AG04449 (cell line): ENCODE measurements at regions of chr15 and their contacts with region 1.

Region 1: DNA sequence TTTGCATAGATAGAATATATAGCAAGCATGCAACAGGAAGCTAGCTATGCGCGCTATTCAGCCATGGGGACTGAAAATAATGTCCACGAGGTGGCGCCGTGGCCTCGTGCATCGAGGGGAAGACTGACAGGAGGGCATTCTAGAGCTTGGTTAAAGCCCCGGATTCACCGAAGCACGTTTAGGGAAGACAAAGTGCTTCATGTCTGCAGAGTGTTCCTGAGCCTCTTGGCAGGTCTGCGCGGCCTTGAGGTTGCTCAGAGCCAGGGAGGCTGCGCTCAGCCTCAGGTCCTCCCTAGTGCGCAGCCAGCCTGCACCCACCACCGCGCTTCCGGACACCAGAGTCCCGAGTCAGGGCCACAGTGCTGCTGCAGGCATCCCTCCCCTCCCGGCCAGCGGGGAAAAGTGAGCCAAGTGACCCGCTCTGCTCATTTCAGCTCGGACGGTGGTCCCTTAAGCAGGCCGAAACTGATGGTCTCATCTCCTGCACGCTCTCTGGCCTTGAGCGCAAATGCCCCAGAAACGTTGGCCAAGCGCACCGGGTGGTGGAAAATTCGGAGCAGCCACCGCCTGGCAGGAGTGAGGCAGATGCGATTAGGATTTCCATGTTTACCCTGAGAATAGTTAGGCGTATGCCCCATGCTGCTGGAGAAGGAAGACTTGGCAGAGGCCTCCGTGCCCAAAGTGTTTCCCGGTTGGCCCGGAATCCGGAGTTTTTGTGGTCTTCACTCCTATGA is 24.8 kb downstream of the GABRA5 start:
- DNase-seq: no peak
- H3K4me3 ChIP-seq: peak overlapping the region; percentile 42
- CTCF ChIP-seq: peak; percentile 74

Region 2: GRCh38 chr15:26391567-26392194 is 499.9 kb before region 1 on chr15:
- CTCF ChIA-PET with region 1: no interaction called
- POLR2A ChIA-PET with region 1: no interaction called
- DNase-seq: no peak
- H3K4me3 ChIP-seq: no peak overlapping the region
- CTCF ChIP-seq: no peak

Region 3: DNA sequence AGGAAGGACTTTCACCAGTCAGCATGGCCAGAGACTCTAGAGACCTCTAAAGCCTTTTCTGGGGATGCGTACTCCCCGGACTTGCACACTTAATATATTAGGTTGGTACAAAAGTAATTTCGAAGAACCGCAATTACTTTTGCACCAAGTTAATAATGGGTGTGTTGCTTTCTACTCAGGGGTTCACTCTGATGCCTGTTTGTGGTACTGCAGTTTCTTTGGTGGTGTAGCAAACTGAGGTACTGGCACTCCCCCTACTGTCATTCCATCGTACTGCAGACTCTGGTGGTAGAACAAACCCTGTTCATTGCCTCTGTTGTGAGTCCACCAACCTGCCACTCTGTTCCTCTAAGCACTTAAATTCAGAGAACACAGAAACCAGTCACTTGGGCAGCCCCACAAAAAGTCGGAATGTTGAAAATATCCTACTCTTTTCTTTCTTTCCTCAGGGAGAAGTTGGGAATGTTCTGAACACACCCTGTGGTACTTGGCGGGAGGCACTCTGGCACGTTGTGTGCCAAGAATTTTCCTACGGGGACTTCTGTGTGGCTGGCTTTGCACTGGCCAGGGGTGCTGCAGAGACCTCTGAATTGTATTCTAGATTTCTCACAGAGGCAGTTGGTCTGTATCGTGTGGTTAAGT is 125.7 kb after region 1 on chr15:
- CTCF ChIA-PET with region 1: interaction called, 61 read pairs
- POLR2A ChIA-PET with region 1: no interaction called
- DNase-seq: peak; percentile 17
- H3K4me3 ChIP-seq: no peak overlapping the region
- CTCF ChIP-seq: peak; percentile 89

Region 4: DNA sequence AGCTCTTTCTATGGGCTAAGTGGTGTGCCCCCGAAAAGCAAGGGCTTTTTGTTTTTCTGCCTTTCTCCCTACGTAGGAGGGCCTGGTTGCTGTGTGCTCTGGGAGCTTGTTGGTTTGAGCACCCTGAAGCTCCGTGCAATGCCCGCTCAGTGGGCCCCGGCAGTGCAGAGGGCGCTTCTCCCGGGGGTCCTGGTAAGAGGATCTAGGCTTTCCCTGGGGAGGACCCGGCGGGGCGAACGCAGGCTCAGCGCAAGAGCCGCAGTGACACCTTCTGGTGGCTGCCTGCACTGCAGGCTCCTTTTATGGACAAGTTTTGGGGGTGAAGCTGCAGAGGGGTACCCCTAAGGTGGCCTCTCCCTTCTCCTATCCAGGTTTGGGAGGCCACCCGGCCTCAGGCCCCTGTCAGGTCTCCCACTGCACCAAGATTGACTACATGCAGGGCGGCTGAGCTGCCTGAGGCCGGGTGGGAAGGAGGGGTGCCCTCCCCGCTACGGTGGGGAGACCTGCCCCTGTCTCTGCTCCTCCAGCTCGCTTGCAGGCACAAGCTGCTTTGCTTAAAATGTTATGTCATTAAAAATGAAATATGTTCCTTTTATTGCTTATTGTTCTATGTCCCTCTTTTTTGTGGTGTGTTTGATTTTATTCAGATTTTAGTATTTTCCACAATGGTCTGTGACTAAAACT is 467.3 kb after region 1 on chr15:
- CTCF ChIA-PET with region 1: interaction called, 17 read pairs
- POLR2A ChIA-PET with region 1: no interaction called
- DNase-seq: no peak
- H3K4me3 ChIP-seq: no peak overlapping the region
- CTCF ChIP-seq: peak; percentile 76

Region 5: DNA sequence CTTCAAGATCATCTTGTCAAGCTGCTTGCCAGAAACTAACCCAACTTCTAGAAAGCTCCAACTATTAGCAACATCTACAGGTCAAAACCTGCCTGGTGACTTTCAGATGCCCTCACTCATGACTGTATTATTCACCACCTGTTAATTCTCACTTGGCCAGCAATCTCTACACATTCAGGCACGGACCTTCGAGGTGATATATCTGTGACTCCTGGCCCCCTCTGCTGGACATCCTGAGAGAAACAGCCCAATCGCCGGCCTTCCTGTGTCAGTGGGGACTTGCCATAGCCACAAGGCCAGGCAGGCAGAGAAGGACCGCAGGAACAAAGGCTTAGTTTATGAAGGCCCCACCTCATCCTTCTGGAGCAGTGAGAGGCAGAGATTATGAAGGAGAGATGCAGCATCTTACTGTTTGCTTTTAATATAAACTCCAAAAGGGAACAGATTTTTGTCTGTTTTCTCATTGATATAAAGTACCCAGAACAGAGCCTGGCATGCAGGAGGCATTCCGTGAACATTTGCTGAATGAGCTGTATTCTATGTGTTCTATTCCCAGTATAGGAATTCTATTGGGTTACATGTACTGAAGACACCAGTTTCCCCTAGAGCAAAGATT is 1231.9 kb after region 1 on chr15:
- CTCF ChIA-PET with region 1: interaction called, 31 read pairs
- POLR2A ChIA-PET with region 1: no interaction called
- DNase-seq: no peak
- H3K4me3 ChIP-seq: no peak overlapping the region
- CTCF ChIP-seq: peak; percentile 81